Mammary epithelial cell (primary cell): ENCODE measurements at regions of chr5 and their contacts with region 1.

Region 1: DNA sequence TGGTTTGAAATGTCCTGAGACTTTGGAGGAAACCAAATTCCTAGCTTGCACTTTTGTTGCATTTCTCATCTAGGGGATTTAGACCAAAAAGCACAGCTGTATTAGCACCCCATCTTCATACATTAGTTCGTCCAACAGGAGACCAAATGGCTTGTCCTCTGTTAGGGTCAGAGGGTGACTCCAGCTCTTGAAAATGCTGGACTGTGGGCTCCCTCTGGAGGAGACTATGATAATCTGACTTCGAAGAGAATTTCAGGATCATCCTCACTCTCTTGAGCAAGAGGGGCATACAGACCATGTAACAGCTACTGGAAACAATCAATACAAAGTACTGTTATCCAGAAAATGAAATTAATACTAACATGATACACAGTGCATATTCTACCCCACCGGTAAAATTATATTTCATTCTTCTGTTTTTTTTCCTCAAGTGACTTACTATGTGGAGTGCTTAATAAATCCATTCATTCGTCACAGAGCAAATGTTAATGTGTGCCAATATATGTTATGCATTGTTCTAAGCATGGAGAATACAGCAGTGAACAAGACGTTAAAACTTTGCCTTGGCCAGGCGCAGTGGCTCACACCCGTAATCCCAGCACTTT is 63.7 kb upstream of the PPP2CA start:
- DNase-seq: peak; percentile 52
- H3K4me3 ChIP-seq: no peak overlapping the region
- H3K27ac ChIP-seq: no peak overlapping the region
- H3K4me1 ChIP-seq: no peaks in the 10 kb centered on the region
- H3K27me3 ChIP-seq: no peaks in the 10 kb centered on the region
- CTCF ChIP-seq: peak; percentile 76 to 78

Region 2: DNA sequence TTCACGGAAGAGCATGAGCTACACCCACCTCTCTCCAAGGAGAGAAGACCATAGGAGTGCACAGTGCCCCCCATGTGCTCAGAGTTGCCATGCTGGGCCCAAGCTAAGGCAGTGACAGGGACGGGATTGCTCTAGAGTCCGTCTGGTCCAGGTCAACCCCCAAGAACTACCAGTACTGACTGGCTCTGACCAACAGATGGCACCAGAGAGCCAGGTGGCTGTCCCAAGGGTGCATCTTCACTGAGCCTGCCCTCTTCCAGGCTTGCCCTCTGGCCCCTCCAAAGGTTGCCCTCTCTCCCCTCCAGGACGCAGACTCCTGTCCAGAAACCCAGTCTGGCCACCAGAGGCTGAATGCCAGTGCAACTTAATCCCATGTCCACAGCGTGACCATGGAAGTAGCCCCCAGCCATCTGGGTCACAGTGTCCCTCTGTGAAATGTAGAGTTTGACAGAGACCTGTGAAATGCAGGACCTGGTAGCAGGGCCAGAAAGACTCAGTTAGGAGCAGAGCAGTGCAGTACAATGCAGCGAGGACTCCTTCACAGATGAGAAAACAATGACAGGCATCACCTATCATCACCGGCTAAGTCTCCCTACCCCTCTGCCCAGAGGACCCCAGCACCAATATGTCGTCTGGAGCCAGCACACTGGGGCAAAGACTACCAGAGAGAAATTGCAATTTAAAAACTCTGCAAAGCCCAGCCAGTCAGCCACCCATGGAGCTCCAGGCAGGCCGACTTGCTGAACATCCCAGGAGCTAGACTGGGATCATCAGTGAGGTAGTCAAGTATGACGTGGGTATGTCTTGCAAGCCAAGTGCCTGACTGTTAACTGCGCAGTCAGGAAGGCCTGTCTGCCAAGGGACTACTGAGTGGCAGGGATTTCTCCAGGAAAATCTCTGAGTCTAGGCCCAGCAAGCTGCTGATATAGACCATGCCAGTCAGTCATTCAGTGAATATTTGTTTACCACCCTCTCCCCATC is 105.2 kb before region 1 on chr5:
- CTCF ChIA-PET with region 1: no interaction called
- dilution Hi-C with region 1: no loop called
- in situ Hi-C with region 1: loop called in 1 of 2 experiments (anchors 5 kb)
- intact Hi-C with region 1: loop called (anchors 1 kb)
- DNase-seq: peak; percentile 42
- H3K4me3 ChIP-seq: no peak overlapping the region
- H3K27ac ChIP-seq: no peak overlapping the region
- H3K4me1 ChIP-seq: no peaks in the 10 kb centered on the region
- H3K27me3 ChIP-seq: no peaks in the 10 kb centered on the region
- CTCF ChIP-seq: peak; percentile 88 to 97

Region 3: GRCh38 chr5:134240421-134240962 is 49.1 kb before region 1 on chr5:
- CTCF ChIA-PET with region 1: no interaction called
- dilution Hi-C with region 1: loop called (anchors 5 kb)
- in situ Hi-C with region 1: no loop called
- intact Hi-C with region 1: no loop called
- DNase-seq: peak; percentile 44
- H3K4me3 ChIP-seq: no peak overlapping the region
- H3K27ac ChIP-seq: no peak overlapping the region
- H3K4me1 ChIP-seq: peaks cover 11% of the 10 kb centered on the region
- H3K27me3 ChIP-seq: no peaks in the 10 kb centered on the region
- CTCF ChIP-seq: no peak